Lower leg skin (tissue), 4 donors: ENCODE measurements at regions of chr4 and their contacts with region 1.

Region 1: DNA sequence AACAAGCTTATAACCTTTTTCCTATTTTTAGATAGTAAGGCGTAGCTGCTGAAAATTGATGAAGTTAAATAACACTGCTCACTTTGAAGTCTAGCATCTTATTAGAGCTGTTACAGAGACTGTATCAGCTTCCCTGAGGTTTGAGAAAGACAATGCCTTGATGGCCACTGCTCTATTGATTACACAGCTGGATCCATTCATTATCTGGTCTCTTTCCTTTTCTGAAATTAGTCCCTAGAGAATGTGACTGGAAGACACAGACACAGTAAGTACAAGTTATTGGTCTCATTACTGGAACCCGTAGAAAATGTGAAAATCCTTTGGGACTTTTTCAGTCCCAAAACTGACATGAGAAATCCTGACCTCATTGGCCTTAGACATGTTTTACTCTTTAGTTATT is 188.3 kb downstream of the NAF1 start:
- DNase-seq: no peak
- H3K4me3 ChIP-seq: no peak overlapping the region
- CTCF ChIP-seq: no peak
- POLR2A ChIP-seq: no peak

Region 2: DNA sequence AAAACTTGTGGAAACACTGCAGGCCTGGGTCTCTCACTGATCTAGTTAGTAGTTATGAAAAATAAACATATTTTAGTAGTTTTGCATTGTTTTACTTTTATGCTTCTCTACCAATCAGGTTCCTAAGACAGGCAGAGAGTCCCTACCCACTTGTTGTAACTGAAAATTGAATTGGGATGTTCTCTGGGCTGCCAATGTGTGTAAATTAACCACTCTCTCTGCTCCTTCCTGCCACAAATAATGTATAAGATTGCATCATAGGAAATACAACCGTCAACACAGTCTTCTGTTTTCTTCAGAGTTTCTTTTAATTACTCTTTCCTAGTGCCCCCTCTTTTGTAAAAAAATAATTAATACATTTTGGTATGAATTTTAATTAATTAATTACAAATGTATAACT is 1491.9 kb before region 1 on chr4:
- intact Hi-C with region 1: loop called (anchors 5 kb)
- DNase-seq: no peak
- H3K4me3 ChIP-seq: no peak overlapping the region
- CTCF ChIP-seq: no peak
- POLR2A ChIP-seq: no peak